BJ (cell line): ENCODE measurements at regions of chr3 and their contacts with region 1.

Region 1: DNA sequence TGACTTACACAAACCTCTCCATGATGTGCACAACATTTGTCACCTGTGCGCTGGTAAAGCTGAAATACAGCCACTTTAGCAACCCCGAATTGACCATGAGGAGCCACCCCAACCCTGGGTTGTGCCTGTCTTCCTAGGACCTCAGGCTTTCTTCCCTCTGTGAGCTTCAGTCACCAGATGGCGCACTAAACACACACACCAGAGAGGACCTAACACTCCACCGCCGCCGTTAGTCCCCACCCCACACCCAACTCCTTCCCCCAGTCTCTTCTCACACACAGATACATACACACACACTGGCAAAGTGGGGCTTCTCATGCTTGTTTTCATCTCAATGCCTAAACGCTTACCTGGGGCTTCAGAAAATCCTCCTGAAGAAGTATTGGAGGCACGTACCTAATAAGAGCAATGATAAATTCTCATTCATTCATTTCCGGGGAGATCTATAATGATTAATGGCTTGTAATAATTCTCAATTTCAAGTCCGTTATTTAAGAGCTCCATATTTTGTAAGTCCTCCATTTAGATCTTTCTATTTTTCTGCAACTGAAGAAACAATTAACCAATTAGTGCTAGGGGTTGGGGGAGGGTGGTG is 2.1 kb upstream of the CCDC80 start:
- DNase-seq: no peak
- H3K4me3 ChIP-seq: no peak overlapping the region
- H3K27me3 ChIP-seq: no peaks in the 10 kb centered on the region
- CTCF ChIP-seq: peak; percentile 90

Region 2: GRCh38 chr3:112582244-112582874 is 60.6 kb before region 1 on chr3:
- CTCF ChIA-PET with region 1: interaction called, 20 read pairs
- POLR2A ChIA-PET with region 1: no interaction called
- DNase-seq: no peak
- H3K4me3 ChIP-seq: no peak overlapping the region
- H3K27me3 ChIP-seq: no peaks in the 10 kb centered on the region
- CTCF ChIP-seq: peak; percentile 66

Region 3: GRCh38 chr3:112681822-112682325 is 38.9 kb after region 1 on chr3:
- CTCF ChIA-PET with region 1: interaction called, 37 read pairs
- POLR2A ChIA-PET with region 1: interaction called, 4 read pairs
- DNase-seq: peak; percentile 61
- H3K4me3 ChIP-seq: no peak overlapping the region
- H3K27me3 ChIP-seq: no peaks in the 10 kb centered on the region
- CTCF ChIP-seq: no peak

Region 4: DNA sequence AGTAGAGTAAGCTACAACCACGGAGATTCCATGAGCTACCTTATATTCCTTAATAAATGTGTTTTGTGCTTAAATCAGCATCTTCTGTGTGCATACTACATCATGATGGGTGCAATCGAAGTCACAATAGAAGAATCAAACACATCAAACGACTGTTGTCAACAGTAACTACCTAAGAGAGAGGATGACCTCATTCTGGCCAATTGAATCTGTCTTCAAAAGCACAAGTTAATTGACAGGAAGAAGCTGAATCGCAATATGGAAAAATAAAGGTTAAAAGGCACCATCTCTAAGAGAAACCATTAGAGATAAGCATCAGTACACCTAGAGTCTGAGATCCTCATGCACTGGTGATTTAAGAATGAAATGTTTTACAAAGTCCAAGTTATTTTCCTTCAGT is 164.7 kb after region 1 on chr3:
- CTCF ChIA-PET with region 1: interaction called, 155 read pairs
- POLR2A ChIA-PET with region 1: interaction called, 6 read pairs
- DNase-seq: no peak
- H3K4me3 ChIP-seq: no peak overlapping the region
- H3K27me3 ChIP-seq: no peaks in the 10 kb centered on the region
- CTCF ChIP-seq: no peak

Region 5: GRCh38 chr3:112979240-112979832 is 336.3 kb after region 1 on chr3:
- CTCF ChIA-PET with region 1: interaction called, 35 read pairs
- POLR2A ChIA-PET with region 1: interaction called, 3 read pairs
- DNase-seq: no peak
- H3K4me3 ChIP-seq: no peak overlapping the region
- H3K27me3 ChIP-seq: no peaks in the 10 kb centered on the region
- CTCF ChIP-seq: peak; percentile 60